AG04449 (cell line): ENCODE measurements at regions of chr11 and their contacts with region 1.

Region 1: GRCh38 chr11:12159351-12160099 is 49.1 kb downstream of the MICAL2 start:
- DNase-seq: peak; percentile 81
- H3K4me3 ChIP-seq: no peak overlapping the region
- CTCF ChIP-seq: peak; percentile 21

Region 2: DNA sequence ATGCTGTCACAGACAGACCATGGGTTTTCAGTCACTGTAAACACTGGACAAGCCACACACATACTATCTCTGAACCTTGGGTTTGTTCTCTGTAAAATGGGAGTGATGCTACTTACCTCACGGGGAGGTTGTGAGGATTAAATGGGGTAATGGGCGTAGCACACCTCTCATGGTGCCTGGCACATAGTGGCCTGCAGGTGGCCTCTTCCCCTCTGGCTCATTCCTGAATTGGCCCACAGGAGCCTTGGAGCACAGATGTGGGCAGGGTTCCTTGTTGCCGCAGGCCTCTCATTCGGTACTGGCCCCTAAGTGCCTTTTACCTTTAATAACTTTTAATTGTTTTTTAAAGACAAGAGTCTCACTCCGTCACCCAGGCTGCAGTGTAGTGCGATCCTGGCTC is 37.4 kb before region 1 on chr11:
- CTCF ChIA-PET with region 1: interaction called, 10 read pairs
- POLR2A ChIA-PET with region 1: interaction called, 5 read pairs
- DNase-seq: no peak
- H3K4me3 ChIP-seq: no peak overlapping the region
- CTCF ChIP-seq: peak; percentile 44

Region 3: DNA sequence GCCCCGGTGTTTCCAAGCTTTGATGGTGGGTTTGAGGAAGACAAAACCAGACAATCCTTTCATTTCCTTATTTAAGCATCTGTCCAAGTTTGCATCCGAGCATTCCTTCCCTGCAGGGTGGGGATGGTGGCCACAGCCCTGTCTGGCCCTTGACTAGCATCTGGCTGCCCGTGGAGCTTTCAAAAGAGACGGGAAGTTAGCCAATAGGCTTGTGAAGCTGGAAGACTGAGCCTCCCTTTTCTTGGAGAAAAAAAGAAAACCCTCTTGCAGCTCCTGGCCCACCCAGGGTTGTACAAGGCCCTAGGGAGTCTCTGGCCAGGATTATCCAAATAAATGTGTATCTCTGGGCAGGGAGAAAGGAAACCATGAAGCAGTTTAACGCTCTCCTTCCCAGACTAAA is 11.5 kb after region 1 on chr11:
- CTCF ChIA-PET with region 1: interaction called, 10 read pairs
- POLR2A ChIA-PET with region 1: interaction called, 5 read pairs
- DNase-seq: no peak
- H3K4me3 ChIP-seq: no peak overlapping the region
- CTCF ChIP-seq: no peak

Region 4: GRCh38 chr11:12182676-12183541 is 23.4 kb after region 1 on chr11:
- CTCF ChIA-PET with region 1: interaction called, 3 read pairs
- POLR2A ChIA-PET with region 1: interaction called, 10 read pairs
- DNase-seq: peak; percentile 83
- H3K4me3 ChIP-seq: no peak overlapping the region
- CTCF ChIP-seq: no peak

Region 5: DNA sequence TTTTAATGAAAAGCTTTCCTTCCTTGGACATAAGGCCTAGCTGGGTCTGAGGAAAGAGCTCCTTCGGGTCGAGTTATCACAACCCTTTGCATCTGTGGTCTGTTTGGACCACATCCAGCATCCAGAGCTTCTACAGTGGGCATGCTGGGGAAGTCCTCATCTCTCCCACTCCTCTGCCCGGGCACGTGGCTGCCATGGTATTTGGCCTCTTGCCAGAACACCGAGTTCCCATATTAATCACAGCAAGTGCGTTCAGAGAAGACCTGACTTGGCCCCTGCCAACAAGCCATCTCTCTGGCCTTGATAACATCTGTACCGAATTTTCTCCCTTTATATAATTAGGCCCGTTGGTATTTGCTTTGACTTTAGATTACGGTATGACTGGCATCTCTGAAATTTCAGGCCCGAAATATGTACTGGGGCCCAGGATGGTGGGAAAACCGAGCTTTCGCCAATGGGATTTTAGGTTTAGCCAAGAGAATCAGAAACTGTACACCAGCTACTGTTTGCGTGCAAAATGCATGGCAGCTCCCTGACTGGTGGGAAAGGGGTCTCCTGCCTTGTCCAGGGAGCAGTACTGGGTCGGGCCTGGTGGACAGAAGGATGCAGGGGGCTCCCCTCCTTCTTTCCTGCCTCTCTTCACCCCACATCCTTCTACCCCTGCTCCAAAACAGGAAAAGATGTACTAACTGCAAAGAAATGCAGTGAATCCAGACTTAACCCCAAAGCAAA is 40.9 kb after region 1 on chr11:
- CTCF ChIA-PET with region 1: interaction called, 6 read pairs
- POLR2A ChIA-PET with region 1: interaction called, 15 read pairs
- DNase-seq: peak; percentile 95
- H3K4me3 ChIP-seq: no peak overlapping the region
- CTCF ChIP-seq: no peak

Region 6: DNA sequence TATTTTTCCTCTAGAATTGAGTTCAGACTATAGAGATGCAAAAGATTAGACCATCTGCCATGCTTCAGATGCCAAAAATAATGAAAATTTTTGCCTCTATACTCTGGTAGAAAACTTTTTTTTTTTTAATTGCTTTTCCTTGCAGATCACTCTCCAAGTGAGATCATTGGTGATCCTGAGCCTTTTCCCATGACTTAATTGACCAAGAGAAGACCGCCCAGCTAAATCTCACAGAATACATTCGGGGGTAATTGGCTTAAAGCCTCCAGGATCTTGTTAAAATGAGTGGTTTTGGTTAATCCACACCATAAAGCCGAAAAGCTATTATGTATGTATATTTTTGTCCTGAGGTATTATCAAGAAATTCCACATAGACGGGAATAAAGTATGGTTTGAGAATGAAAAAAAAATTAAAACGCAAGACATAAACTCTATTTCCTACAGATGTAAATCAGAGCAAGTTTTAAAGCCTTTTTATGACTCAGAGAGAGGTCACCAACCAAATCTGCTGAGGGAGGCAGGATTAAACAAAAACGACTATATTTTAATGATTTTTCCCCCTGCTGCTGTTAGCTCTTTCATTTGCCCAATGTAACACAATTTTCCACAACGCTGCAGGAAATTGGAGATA is 281.8 kb after region 1 on chr11:
- CTCF ChIA-PET with region 1: no interaction called
- POLR2A ChIA-PET with region 1: no interaction called
- DNase-seq: no peak
- H3K4me3 ChIP-seq: no peak overlapping the region
- CTCF ChIP-seq: no peak